ENCODE measurements at regions of chr12 and their contacts with region 1.

Region 1: GRCh38 chr12:49331380-49332222 is 5.4 kb downstream of the C1QL4 start:
- DNase-seq: no peak
- H3K4me3 ChIP-seq: no peak overlapping the region
- H3K27me3 ChIP-seq: peaks cover 7% of the 10 kb centered on the region
- CTCF ChIP-seq: peak; percentile 87

Region 2: GRCh38 chr12:49288412-49288853 is 43.2 kb before region 1 on chr12:
- CTCF ChIA-PET with region 1: interaction called, 24 read pairs
- POLR2A ChIA-PET with region 1: no interaction called
- DNase-seq: no peak
- H3K4me3 ChIP-seq: no peak overlapping the region
- H3K27me3 ChIP-seq: peaks cover 8% of the 10 kb centered on the region
- CTCF ChIP-seq: peak; percentile 82

Region 3: DNA sequence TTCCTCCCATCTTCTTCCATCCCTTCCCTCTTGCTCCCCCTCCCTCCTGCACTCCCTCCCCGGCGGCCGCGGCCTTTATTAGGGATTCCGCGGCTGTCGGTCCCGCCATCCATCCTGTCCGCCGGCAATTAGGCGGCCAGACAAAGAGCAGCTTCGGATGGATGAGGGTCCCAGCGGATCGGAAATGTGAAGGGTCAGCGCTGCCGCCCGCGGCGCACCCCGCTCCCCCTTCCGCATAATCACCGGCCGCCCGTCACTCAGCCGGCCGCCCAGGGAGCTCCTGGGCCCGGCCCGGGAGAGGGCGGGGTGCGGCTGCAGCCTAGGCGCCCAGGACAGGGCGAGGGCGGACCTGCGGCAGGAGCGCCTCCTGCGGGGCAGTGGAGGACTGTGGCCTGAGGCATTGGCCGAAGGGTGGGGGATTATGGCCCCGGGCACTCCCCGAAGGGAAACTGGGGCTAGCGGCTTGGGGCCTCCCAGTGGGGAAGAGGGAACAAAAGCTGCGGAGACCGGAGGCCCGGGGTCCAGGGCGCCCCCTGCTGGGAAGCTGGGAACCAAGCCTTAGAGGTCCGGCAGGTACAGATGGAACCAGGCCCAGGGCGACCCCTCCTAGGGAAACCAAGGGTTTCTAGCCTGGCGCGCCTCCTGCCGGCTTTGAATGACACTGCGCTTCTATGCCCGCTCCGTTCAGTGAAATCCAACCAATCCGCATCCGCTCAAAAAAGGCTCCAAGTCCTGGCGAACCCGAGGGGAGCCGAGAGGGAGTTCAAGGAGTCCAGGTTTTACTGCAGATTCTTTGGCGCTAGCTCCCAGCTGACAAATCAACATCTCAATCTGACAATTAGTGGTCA is 10.7 kb after region 1 on chr12:
- CTCF ChIA-PET with region 1: interaction called, 52 read pairs
- POLR2A ChIA-PET with region 1: no interaction called
- DNase-seq: no peak
- H3K4me3 ChIP-seq: peak overlapping the region; percentile 29
- H3K27me3 ChIP-seq: peaks cover 60% of the 10 kb centered on the region
- CTCF ChIP-seq: peak; percentile 86

Region 4: DNA sequence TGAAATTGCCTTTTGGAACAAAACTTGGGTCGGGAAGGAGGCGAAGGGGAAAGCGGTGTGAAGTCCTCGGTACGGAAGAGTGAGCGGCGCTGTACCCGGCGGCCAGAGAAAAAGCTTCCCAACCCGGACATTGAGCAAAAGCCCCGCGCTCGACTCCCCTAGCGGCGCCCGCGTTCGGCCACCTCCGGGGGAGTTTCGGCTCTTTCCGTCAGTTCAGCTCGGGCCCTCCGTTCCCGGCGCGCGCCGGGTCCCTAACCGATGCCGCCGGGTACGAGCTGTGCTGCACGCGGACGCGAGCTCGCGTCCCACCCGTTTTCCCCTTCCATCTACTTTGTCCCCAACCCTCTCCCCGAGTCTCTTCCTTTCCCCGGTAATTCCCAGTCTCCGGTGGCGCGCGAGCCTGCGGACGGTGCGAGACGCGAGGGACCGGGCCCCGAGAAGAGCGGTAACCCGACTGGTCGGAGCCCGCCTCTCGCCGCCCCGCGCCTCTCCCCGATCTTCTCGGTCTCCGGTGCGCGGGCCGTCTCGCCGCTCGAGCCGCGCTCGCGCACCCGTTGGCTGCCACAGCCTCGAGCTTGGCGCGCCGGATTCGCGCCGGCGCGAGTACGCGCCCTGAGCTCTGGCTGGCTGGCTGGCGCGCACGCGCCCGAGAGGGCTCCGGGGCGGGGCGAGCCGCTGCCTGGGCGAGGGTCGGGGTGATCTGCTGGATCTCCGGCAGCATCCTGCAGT is 35.2 kb after region 1 on chr12:
- CTCF ChIA-PET with region 1: interaction called, 10 read pairs
- POLR2A ChIA-PET with region 1: no interaction called
- DNase-seq: peak; percentile 70
- H3K4me3 ChIP-seq: peak overlapping the region; percentile 73
- H3K27me3 ChIP-seq: no peaks in the 10 kb centered on the region
- CTCF ChIP-seq: peak; percentile 41

Region 5: DNA sequence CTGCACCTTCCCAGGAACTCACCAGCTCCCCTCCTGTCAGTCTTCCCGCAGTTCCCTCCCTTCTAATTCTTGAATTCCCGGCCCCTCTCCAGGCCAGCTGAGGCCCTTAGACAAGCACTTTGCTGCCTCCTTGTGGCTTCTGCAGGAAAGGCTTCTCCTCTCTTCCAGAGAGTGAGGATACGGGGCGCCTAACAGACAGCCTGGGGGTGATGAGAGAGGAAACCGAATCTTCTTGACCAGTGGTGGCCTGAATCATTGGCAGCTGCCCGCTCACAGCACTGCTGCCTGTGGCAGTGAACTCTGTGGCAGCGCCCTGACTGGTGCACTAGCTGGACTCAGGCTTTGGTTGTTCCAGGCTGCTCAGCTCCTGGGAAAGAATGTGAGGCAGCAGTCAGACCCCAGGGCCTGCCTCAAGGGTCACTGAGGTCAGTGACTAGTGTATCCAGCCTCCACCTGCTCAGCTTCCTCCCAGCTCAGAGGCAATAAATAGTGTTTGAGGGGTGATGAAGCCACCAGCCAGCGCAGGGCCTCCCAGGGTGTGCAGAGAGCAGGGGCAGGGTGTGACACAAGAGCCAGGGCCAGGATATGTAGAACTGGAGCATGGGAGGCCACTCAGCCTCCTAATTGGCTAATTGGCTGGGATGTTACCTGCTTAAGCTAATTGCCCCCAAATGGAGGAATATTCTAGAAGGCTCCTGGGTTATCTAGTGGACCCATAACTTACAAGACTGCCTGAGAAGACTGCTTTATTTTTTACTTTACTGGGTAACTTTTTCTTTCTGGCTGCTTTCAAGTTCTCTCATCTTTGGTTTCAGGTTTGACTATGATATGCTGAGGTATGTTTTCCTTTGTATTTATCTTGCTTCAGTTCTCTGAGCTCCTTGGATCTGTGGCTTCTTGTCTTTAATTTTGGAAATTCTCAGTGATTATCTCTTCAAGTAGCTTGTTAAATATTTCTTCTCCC is 249.3 kb after region 1 on chr12:
- CTCF ChIA-PET with region 1: interaction called, 49 read pairs
- POLR2A ChIA-PET with region 1: no interaction called
- DNase-seq: no peak
- H3K4me3 ChIP-seq: no peak overlapping the region
- H3K27me3 ChIP-seq: no peaks in the 10 kb centered on the region
- CTCF ChIP-seq: peak; percentile 95

Region 6: DNA sequence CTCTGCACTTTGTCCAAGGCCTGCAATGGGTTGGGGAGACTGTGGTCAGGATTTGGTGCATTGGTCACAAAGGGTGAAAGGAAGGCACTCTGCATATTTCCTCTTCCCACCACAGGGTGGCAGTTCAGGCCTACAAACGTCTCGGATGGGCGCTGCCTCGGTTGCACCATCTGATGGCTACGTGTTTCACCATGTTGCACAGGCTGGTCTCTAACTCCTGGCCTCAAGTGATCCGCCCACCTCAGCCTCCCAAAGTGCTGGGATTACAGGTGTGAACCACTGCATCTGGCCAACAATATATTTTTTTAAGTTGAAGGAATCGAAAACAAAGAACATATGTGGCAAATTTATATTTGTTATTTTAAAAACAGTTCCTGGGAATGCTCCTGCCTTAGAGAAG is 444.8 kb after region 1 on chr12:
- CTCF ChIA-PET with region 1: no interaction called
- POLR2A ChIA-PET with region 1: no interaction called
- DNase-seq: no peak
- H3K4me3 ChIP-seq: no peak overlapping the region
- H3K27me3 ChIP-seq: no peaks in the 10 kb centered on the region
- CTCF ChIP-seq: peak; percentile 84

Measured in BJ (cell line).